ENCODE measurements at regions of chr2 and their contacts with region 1.

Region 1: GRCh38 chr2:202982779-202983491 is 31.7 kb upstream of the NBEAL1 start:
- DNase-seq: no peak
- ATAC-seq: no peak
- H3K4me3 ChIP-seq: no peak overlapping the region
- H3K4me3 Mint-ChIP-seq: no peak overlapping the region
- H3K27ac ChIP-seq: no peak overlapping the region
- H3K27ac Mint-ChIP-seq: no peak overlapping the region
- H3K4me1 ChIP-seq: no peaks in the 10 kb centered on the region
- H3K4me1 Mint-ChIP-seq: no peaks in the 10 kb centered on the region
- H3K27me3 ChIP-seq: no peaks in the 10 kb centered on the region
- H3K27me3 Mint-ChIP-seq: no peaks in the 10 kb centered on the region
- CTCF ChIP-seq: no peak

Region 2: GRCh38 chr2:203035879-203036470 is 53.0 kb after region 1 on chr2:
- CTCF ChIA-PET with region 1: no interaction called
- POLR2A ChIA-PET with region 1: no interaction called
- intact Hi-C with region 1: loop called (anchors 10 kb)
- DNase-seq: no peak
- ATAC-seq: no peak
- H3K4me3 ChIP-seq: no peak overlapping the region
- H3K4me3 Mint-ChIP-seq: no peak overlapping the region
- H3K27ac ChIP-seq: no peak overlapping the region
- H3K27ac Mint-ChIP-seq: no peak overlapping the region
- H3K4me1 ChIP-seq: no peaks in the 10 kb centered on the region
- H3K4me1 Mint-ChIP-seq: no peaks in the 10 kb centered on the region
- H3K27me3 ChIP-seq: no peaks in the 10 kb centered on the region
- H3K27me3 Mint-ChIP-seq: no peaks in the 10 kb centered on the region
- CTCF ChIP-seq: no peak

Region 3: GRCh38 chr2:203122301-203122986 is 139.5 kb after region 1 on chr2:
- CTCF ChIA-PET with region 1: no interaction called
- POLR2A ChIA-PET with region 1: no interaction called
- intact Hi-C with region 1: no loop called
- DNase-seq: no peak
- ATAC-seq: no peak
- H3K4me3 ChIP-seq: no peak overlapping the region
- H3K4me3 Mint-ChIP-seq: no peak overlapping the region
- H3K27ac ChIP-seq: no peak overlapping the region
- H3K27ac Mint-ChIP-seq: no peak overlapping the region
- H3K4me1 ChIP-seq: no peaks in the 10 kb centered on the region
- H3K4me1 Mint-ChIP-seq: no peaks in the 10 kb centered on the region
- H3K27me3 ChIP-seq: no peaks in the 10 kb centered on the region
- H3K27me3 Mint-ChIP-seq: no peaks in the 10 kb centered on the region
- CTCF ChIP-seq: no peak